Gastrocnemius medialis (tissue), 4 donors: ENCODE measurements at regions of chr1 and their contacts with region 1.

Region 1: GRCh38 chr1:56709269-56709880 is 64.3 kb downstream of the PRKAA2 start:
- DNase-seq: no peak
- ATAC-seq: peak; percentile 64 to 83
- H3K4me3 ChIP-seq: no peak overlapping the region
- H3K27ac ChIP-seq: no peak overlapping the region
- H3K4me1 ChIP-seq: peaks cover 0 to 4% of the 10 kb centered on the region in 2 donors
- H3K27me3 ChIP-seq: no peaks in the 10 kb centered on the region
- CTCF ChIP-seq: peak; percentile 58 to 67 (median 64)
- POLR2A ChIP-seq: no peak

Region 2: GRCh38 chr1:55277377-55278130 is 1431.8 kb before region 1 on chr1:
- in situ Hi-C with region 1: loop called (anchors 5 to 25 kb)
- intact Hi-C with region 1: no loop called
- DNase-seq: peak; percentile 66 to 75
- ATAC-seq: peak; percentile 74 to 83
- H3K4me3 ChIP-seq: no peak overlapping the region
- H3K27ac ChIP-seq: peak overlapping the region; percentile 35 to 80 (median 75)
- H3K4me1 ChIP-seq: peaks cover 13 to 19% of the 10 kb centered on the region in 2 donors
- H3K27me3 ChIP-seq: no peaks in the 10 kb centered on the region
- CTCF ChIP-seq: peak; percentile 83 to 95 (median 89)
- POLR2A ChIP-seq: no peak

Region 3: GRCh38 chr1:55284852-55285251 is 1424.5 kb before region 1 on chr1:
- in situ Hi-C with region 1: loop called (anchors 5 to 25 kb)
- intact Hi-C with region 1: loop called (anchors 2 kb)
- DNase-seq: no peak
- ATAC-seq: peak; percentile 64 to 65
- H3K4me3 ChIP-seq: no peak overlapping the region
- H3K27ac ChIP-seq: no peak overlapping the region
- H3K4me1 ChIP-seq: no peaks in the 10 kb centered on the region
- H3K27me3 ChIP-seq: no peaks in the 10 kb centered on the region
- CTCF ChIP-seq: peak; percentile 32 to 61 (median 47)
- POLR2A ChIP-seq: no peak

Region 4: DNA sequence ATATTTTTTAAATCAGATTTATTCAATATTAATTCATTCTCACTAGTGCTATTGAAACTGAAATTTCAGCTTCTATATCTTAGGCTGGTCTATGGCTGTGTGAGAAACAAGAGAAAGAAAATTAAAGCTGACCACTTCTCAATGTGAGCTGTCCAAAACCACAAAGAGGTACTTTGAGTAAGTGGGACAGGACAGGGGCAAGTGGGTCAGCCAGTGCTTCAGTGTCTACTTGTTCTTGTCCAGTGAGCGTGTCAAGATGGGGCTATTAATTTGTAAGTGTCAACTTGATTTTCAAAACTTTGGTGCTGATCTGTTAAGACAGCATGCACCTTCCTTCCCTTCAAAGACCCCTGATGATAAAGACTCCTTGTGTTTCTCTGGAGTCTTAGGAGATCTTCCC is 663.9 kb before region 1 on chr1:
- in situ Hi-C with region 1: no loop called
- intact Hi-C with region 1: no loop called
- DNase-seq: no peak
- ATAC-seq: no peak
- H3K4me3 ChIP-seq: no peak overlapping the region
- H3K27ac ChIP-seq: no peak overlapping the region
- H3K4me1 ChIP-seq: no peaks in the 10 kb centered on the region
- H3K27me3 ChIP-seq: no peaks in the 10 kb centered on the region
- CTCF ChIP-seq: no peak
- POLR2A ChIP-seq: no peak

Region 5: GRCh38 chr1:56627636-56628039 is 81.7 kb before region 1 on chr1:
- in situ Hi-C with region 1: no loop called
- intact Hi-C with region 1: no loop called
- DNase-seq: no peak
- ATAC-seq: no peak
- H3K4me3 ChIP-seq: no peak overlapping the region
- H3K27ac ChIP-seq: no peak overlapping the region
- H3K4me1 ChIP-seq: no peaks in the 10 kb centered on the region
- H3K27me3 ChIP-seq: no peaks in the 10 kb centered on the region
- CTCF ChIP-seq: no peak
- POLR2A ChIP-seq: no peak

Region 6: DNA sequence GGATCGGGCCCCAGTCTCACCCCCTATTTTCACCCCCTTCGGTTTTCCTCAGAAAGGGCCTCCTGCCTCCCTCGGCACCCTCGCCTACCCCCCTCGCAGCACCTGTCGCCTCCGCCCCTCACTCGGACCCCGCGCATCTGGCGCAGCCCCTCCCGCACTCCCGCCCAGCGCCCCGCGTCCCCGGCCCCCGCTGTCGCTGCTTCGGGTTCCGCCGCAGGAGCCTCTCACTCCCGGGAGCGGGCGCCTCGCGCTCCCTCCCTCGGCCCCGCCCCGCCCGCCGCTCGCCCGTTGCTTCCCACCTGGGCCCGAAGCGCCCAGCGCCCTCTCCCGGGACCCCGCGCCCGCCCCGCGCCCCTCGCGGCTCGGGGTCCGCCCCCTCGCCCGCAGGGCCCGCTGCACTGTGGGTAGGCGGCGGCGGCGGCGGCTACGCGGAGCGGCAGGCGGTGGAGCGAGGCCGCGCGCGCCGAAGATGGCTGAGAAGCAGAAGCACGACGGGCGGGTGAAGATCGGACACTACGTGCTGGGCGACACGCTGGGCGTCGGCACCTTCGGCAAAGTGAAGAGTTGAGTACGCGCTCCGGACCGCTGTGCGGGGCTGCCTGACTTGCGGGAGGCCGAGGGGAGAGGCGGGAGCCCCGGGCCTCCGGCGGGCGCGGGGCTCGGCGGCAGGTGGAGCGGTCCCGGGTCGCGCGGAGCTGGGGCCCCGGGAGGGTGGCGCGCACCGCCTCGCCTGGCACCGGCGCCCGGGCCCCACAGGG is 64.3 kb before region 1 on chr1 and contains the start of gene PRKAA2:
- in situ Hi-C with region 1: no loop called
- intact Hi-C with region 1: loop called (anchors 5 kb)
- DNase-seq: peak; percentile 18 to 53
- ATAC-seq: peak; percentile 62 to 65
- H3K4me3 ChIP-seq: peak within 1 kb of the TSS; percentile 66 to 82 (median 68)
- H3K27ac ChIP-seq: peak within 1 kb of the TSS; percentile 87 to 94 (median 90)
- H3K4me1 ChIP-seq: peaks cover 20 to 25% of the 10 kb centered on the region in 2 donors
- H3K27me3 ChIP-seq: no peaks in the 10 kb centered on the region
- CTCF ChIP-seq: no peak
- POLR2A ChIP-seq: peak; percentile 62 to 66
- total RNA-seq, gene PRKAA2: 24.6 to 78.6 (median 70.9) TPM

Region 7: GRCh38 chr1:56666112-56666608 is 43.2 kb before region 1 on chr1:
- in situ Hi-C with region 1: no loop called
- intact Hi-C with region 1: loop called (anchors 2 kb)
- DNase-seq: no peak
- ATAC-seq: no peak
- H3K4me3 ChIP-seq: no peak overlapping the region
- H3K27ac ChIP-seq: no peak overlapping the region
- H3K4me1 ChIP-seq: peaks cover 28 to 43% of the 10 kb centered on the region in 2 donors
- H3K27me3 ChIP-seq: no peaks in the 10 kb centered on the region
- CTCF ChIP-seq: no peak
- POLR2A ChIP-seq: no peak

Region 8: GRCh38 chr1:56754708-56755479 is 45.5 kb after region 1 on chr1:
- in situ Hi-C with region 1: no loop called
- intact Hi-C with region 1: no loop called
- DNase-seq: no peak
- ATAC-seq: no peak
- H3K4me3 ChIP-seq: no peak overlapping the region
- H3K27ac ChIP-seq: no peak overlapping the region
- H3K4me1 ChIP-seq: no peaks in the 10 kb centered on the region
- H3K27me3 ChIP-seq: no peaks in the 10 kb centered on the region
- CTCF ChIP-seq: no peak
- POLR2A ChIP-seq: no peak

Region 9: GRCh38 chr1:56877973-56878372 is 168.6 kb after region 1 on chr1:
- in situ Hi-C with region 1: no loop called
- intact Hi-C with region 1: no loop called
- DNase-seq: no peak
- ATAC-seq: no peak
- H3K4me3 ChIP-seq: no peak overlapping the region
- H3K27ac ChIP-seq: no peak overlapping the region
- H3K4me1 ChIP-seq: no peaks in the 10 kb centered on the region
- H3K27me3 ChIP-seq: no peaks in the 10 kb centered on the region
- CTCF ChIP-seq: no peak
- POLR2A ChIP-seq: no peak